IMR-90 (cell line): ENCODE measurements at regions of chr7 and their contacts with region 1.

Region 1: DNA sequence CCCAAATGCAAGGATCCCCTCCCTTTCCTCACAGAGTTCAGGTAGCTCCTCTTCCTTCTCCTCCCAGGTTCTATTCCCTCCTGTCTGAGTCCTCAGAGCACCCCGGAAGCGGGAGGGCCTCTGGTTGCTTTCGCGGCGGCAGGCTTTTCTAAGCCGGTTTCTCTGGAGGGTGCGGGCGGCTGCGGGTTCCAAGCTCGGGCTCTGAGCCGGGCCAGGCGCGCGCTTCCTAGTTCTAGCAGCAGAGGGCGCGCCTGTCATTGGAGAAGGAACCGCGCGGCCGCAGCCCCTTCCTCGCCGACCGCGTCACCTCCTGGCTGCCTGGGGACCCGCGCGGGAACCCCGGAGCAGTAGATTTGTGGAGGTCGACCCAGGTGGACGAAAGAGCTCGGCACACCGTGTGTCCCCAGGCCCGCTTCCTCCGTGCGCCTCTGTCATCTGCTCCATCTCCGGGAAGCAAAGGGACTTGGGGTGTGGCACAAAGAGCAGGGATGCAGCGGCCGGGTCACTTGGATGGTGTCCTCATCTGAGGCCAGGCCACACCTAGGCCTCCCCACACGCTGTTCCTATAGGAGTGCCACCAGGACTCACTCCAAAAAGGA is 389.0 kb upstream of the PODXL start:
- DNase-seq: peak; percentile 11
- ATAC-seq: peak; percentile 96
- H3K4me3 ChIP-seq: no peak overlapping the region
- H3K27ac ChIP-seq: no peak overlapping the region
- H3K4me1 ChIP-seq: no peaks in the 10 kb centered on the region
- H3K27me3 ChIP-seq: peaks cover 8% of the 10 kb centered on the region
- CTCF ChIP-seq: peak; percentile 77
- POLR2A ChIP-seq: no peak
- RAD21 ChIP-seq: peak; percentile 83

Region 2: GRCh38 chr7:130721486-130722280 is 1223.7 kb before region 1 on chr7:
- CTCF ChIA-PET with region 1: no interaction called
- POLR2A ChIA-PET with region 1: no interaction called
- dilution Hi-C with region 1: no loop called
- in situ Hi-C with region 1: no loop called
- intact Hi-C with region 1: no loop called
- DNase-seq: peak; percentile 69
- ATAC-seq: peak; percentile 100
- H3K4me3 ChIP-seq: no peak overlapping the region
- H3K27ac ChIP-seq: no peak overlapping the region
- H3K4me1 ChIP-seq: no peaks in the 10 kb centered on the region
- H3K27me3 ChIP-seq: peaks cover 25% of the 10 kb centered on the region
- CTCF ChIP-seq: peak; percentile 79
- POLR2A ChIP-seq: no peak
- RAD21 ChIP-seq: peak; percentile 85

Region 3: DNA sequence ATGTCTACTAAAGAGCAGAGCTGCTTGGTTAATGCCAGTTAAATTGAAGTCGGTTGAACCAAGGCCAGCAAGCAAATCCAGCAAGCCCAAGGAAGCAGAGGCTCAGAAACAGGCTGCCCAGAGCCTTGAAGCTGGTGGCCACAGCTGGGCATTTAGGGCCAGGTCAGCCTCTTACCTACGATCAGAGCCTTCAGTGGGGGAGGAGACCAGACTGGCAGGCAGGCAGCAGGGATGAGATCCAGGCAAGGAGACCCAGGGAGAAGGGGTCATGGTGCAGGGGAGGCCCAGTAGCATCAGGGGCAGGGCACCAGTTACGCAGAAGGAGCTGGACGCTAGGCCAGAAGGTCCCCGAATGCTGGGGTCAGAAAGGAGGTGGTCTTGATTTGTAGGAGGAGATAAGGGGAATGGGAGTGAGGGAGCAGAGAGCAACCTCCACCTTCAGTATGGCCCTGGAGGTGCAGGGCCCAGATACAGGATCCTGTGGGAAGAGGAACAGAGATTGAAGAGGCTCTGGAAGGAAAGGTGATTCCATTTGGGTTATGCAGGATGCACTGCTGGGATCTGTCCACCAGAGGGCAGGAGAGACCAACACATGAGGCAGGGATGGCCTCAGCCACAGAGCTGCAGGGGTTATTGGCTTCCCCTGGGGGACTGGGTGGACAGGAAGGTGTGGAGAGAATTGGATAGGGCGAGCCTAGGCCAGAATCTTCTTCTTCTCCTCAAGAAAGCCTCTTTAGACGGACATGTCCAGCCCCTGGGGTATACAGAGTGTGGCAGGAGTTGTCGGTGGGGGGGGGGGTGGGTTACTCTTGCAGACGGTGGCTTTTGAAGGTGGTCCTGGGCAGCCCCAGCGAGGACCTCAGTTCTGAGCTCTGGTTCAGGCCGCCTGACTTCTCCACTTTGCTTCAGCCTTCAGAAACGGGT is 256.4 kb before region 1 on chr7:
- CTCF ChIA-PET with region 1: no interaction called
- POLR2A ChIA-PET with region 1: interaction called, 3 read pairs
- dilution Hi-C with region 1: no loop called
- in situ Hi-C with region 1: no loop called
- intact Hi-C with region 1: loop called (anchors 2 kb)
- DNase-seq: peak; percentile 49
- ATAC-seq: peak; percentile 97
- H3K4me3 ChIP-seq: no peak overlapping the region
- H3K27ac ChIP-seq: no peak overlapping the region
- H3K4me1 ChIP-seq: no peaks in the 10 kb centered on the region
- H3K27me3 ChIP-seq: peaks cover 40% of the 10 kb centered on the region
- CTCF ChIP-seq: peak; percentile 89
- POLR2A ChIP-seq: no peak
- RAD21 ChIP-seq: peak; percentile 89

Region 4: GRCh38 chr7:131931370-131931769 is 14.0 kb before region 1 on chr7:
- CTCF ChIA-PET with region 1: no interaction called
- POLR2A ChIA-PET with region 1: no interaction called
- dilution Hi-C with region 1: no loop called
- in situ Hi-C with region 1: no loop called
- intact Hi-C with region 1: no loop called
- DNase-seq: peak; percentile 1
- ATAC-seq: no peak
- H3K4me3 ChIP-seq: no peak overlapping the region
- H3K27ac ChIP-seq: no peak overlapping the region
- H3K4me1 ChIP-seq: no peaks in the 10 kb centered on the region
- H3K27me3 ChIP-seq: no peaks in the 10 kb centered on the region
- CTCF ChIP-seq: no peak
- POLR2A ChIP-seq: no peak
- RAD21 ChIP-seq: no peak

Region 5: DNA sequence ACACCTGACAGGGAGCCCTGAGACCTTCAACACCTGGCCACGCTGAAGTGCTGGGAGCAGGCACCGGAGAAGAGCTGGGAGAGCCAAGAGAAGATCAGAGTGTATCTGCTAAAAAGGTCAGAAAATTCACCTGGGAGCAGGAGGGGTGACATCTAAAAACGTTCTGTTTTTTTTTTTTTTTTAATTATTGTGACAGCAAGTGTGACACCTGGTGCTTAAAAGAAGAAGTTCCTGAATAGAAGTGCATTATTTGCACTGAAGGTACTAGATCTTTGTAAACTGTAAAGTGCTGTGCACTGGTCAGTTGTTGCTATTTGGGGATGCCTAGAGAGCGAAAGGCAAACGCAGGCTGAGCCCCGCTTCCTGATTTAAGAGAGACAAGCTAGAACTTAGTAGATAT is 208.8 kb after region 1 on chr7:
- CTCF ChIA-PET with region 1: no interaction called
- POLR2A ChIA-PET with region 1: no interaction called
- dilution Hi-C with region 1: no loop called
- in situ Hi-C with region 1: no loop called
- intact Hi-C with region 1: loop called (anchors 2 kb)
- DNase-seq: no peak
- ATAC-seq: no peak
- H3K4me3 ChIP-seq: no peak overlapping the region
- H3K27ac ChIP-seq: no peak overlapping the region
- H3K4me1 ChIP-seq: no peaks in the 10 kb centered on the region
- H3K27me3 ChIP-seq: peaks cover 2% of the 10 kb centered on the region; the same call in 1 of the 2 replicates
- CTCF ChIP-seq: no peak
- POLR2A ChIP-seq: no peak
- RAD21 ChIP-seq: no peak

Region 6: GRCh38 chr7:132250883-132251653 is 305.7 kb after region 1 on chr7:
- CTCF ChIA-PET with region 1: interaction called, 3 read pairs
- POLR2A ChIA-PET with region 1: no interaction called
- dilution Hi-C with region 1: no loop called
- in situ Hi-C with region 1: no loop called
- intact Hi-C with region 1: loop called (anchors 1 kb)
- DNase-seq: no peak
- ATAC-seq: no peak
- H3K4me3 ChIP-seq: no peak overlapping the region
- H3K27ac ChIP-seq: no peak overlapping the region
- H3K4me1 ChIP-seq: no peaks in the 10 kb centered on the region
- H3K27me3 ChIP-seq: no peaks in the 10 kb centered on the region
- CTCF ChIP-seq: no peak
- POLR2A ChIP-seq: no peak
- RAD21 ChIP-seq: no peak

Region 7: GRCh38 chr7:132318352-132319318 is 373.2 kb after region 1 on chr7:
- CTCF ChIA-PET with region 1: no interaction called
- POLR2A ChIA-PET with region 1: no interaction called
- dilution Hi-C with region 1: no loop called
- in situ Hi-C with region 1: no loop called
- intact Hi-C with region 1: loop called (anchors 2 kb)
- DNase-seq: peak; percentile 72
- ATAC-seq: peak; percentile 100
- H3K4me3 ChIP-seq: no peak overlapping the region
- H3K27ac ChIP-seq: no peak overlapping the region
- H3K4me1 ChIP-seq: no peaks in the 10 kb centered on the region
- H3K27me3 ChIP-seq: no peaks in the 10 kb centered on the region
- CTCF ChIP-seq: peak; percentile 82
- POLR2A ChIP-seq: no peak
- RAD21 ChIP-seq: peak; percentile 76

Region 8: GRCh38 chr7:132402751-132403245 is 457.4 kb after region 1 on chr7:
- CTCF ChIA-PET with region 1: no interaction called
- POLR2A ChIA-PET with region 1: no interaction called
- dilution Hi-C with region 1: no loop called
- in situ Hi-C with region 1: no loop called
- intact Hi-C with region 1: loop called (anchors 5 kb)
- DNase-seq: no peak
- ATAC-seq: no peak
- H3K4me3 ChIP-seq: no peak overlapping the region
- H3K27ac ChIP-seq: no peak overlapping the region
- H3K4me1 ChIP-seq: no peaks in the 10 kb centered on the region
- H3K27me3 ChIP-seq: no peaks in the 10 kb centered on the region
- CTCF ChIP-seq: no peak
- POLR2A ChIP-seq: no peak
- RAD21 ChIP-seq: no peak

Region 9: GRCh38 chr7:132580717-132581285 is 635.4 kb after region 1 on chr7:
- CTCF ChIA-PET with region 1: interaction called, 4 read pairs
- POLR2A ChIA-PET with region 1: no interaction called
- dilution Hi-C with region 1: no loop called
- in situ Hi-C with region 1: loop called (anchors 25 kb)
- intact Hi-C with region 1: loop called (anchors 1 kb)
- DNase-seq: peak; percentile 64
- ATAC-seq: peak; percentile 72
- H3K4me3 ChIP-seq: no peak overlapping the region
- H3K27ac ChIP-seq: no peak overlapping the region
- H3K4me1 ChIP-seq: 0 out of 2 replicates have a peak, but pooled peaks cover 2% of the 10 kb centered on the region
- H3K27me3 ChIP-seq: peaks cover 25% of the 10 kb centered on the region
- CTCF ChIP-seq: peak; percentile 68
- POLR2A ChIP-seq: no peak
- RAD21 ChIP-seq: peak; percentile 66